HEK293 (cell line): ENCODE measurements at regions of chr5 and their contacts with region 1.

Region 1: GRCh38 chr5:138352071-138352721 is at the start of gene KDM3B:
- H3K4me3 ChIP-seq: peak within 1 kb of the TSS; percentile 83
- H3K27ac ChIP-seq: peak within 1 kb of the TSS; percentile 92
- H3K4me1 ChIP-seq: peaks cover 18% of the 10 kb centered on the region
- CTCF ChIP-seq: peak; percentile 98

Region 2: DNA sequence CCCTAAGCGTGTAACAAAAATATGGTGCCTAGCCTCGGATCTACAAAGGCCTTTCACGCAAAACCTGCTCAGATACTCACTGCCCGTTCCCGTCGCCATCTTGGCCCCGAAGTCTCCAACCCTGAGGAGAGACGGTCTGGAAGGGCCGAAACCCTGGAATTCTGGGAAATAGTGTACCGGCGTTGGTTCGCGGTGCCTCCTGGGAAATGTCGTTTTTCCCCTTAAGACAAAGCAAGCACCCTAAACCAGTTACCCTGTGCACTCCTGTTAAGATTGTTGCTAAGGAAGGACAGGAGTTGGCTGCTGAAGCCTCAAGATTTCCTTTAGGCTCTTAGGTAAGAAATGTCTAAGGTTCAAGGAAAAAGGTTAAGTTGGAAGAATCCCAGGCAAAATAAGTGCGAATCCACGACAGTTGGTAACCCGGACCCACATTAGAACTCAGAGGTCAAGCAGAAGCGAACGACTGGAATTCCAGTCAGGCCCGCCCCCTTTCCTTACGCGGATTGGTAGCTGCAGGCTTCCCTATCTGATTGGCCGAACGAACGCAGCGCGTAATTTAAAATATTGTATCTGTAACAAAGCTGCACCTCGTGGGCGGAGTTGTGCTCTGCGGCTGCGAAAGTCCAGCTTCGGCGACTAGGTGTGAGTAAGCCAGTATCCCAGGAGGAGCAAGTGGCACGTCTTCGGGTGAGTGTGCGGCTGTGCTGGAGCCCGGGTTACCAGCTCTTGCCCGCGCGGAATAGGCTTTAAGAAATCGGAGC is 173.5 kb before region 1 on chr5 and contains the starts of genes BRD8 and KIF20A:
- CTCF ChIA-PET with region 1: interaction called, 5 read pairs
- POLR2A ChIA-PET with region 1: interaction called, 11 read pairs
- H3K4me3 ChIP-seq: peak within 1 kb of the TSS; percentile 70
- H3K27ac ChIP-seq: peak within 1 kb of the TSS; percentile 90
- H3K4me1 ChIP-seq: 0 out of 2 replicates have a peak, but pooled peaks cover 3% of the 10 kb centered on the region
- CTCF ChIP-seq: no peak

Region 3: DNA sequence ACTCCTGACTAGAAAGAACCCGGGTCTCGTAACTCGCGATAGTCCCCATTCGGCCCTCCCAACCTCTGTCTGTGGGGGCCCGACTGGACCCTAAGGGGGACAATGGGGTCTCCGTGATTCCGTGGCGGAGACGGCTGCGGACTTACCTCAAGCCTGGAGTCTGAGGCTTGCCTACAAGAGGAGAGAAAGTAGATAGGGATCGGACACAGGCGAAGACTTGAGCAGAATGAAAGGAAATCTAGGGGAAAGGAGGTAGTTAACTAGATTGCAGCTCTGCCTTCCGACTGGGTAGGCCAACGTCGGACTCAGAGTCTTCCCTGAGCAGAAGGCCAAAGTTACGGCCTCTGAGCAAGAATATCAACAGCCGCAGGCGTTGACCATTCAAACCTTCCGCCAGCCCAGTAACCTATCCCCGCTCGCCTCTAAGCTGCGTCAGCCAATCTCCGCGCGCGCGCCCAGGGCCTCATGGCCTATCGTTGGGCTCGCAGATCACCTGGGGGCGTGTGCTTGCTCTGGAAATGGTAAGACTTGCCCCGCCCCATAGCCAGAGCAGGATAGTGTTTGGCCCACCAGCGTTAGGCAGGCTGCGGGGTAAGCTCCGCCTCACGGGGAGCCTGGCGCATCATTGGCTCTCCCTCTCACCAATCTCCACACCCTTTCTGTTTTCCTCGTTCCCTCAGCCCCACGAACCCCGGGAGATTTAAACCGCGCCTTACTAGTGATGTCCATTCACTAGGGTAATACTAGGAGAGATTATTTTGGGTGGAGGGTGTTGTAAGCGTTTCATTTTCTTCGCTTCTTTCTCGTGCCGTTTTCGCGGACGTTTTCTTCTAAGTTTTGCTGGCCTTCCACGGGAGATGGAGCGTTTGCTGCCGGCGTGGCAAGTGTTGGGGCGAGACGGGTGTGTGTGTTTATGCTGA is 20.5 kb before region 1 on chr5 and contains the start of gene CDC25C:
- CTCF ChIA-PET with region 1: interaction called, 273 read pairs
- POLR2A ChIA-PET with region 1: interaction called, 114 read pairs
- H3K4me3 ChIP-seq: peak within 1 kb of the TSS; percentile 78
- H3K27ac ChIP-seq: peak within 1 kb of the TSS; percentile 75
- H3K4me1 ChIP-seq: peaks cover 4% of the 10 kb centered on the region; the same call in 1 of the 2 replicates
- CTCF ChIP-seq: no peak

Region 4: DNA sequence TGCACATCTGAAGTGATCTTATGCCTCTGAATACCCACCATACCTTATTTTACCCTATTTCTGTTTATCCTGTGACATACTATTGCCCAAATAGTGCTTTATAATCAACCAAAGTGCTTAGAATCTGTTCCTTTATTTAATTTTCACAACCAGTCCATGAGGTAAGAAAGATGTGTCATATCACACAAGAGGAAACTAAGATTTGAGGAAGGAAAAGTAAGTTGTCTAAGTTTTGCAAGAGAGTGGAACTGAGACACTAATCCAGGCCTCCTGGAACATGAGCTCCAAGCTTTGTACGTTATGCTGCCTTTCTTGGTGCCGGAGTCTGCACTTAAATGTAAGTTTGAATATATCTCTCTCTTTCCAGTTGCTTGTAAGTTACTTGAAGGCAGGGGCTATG is 17.5 kb after region 1 on chr5:
- CTCF ChIA-PET with region 1: interaction called, 94 read pairs
- POLR2A ChIA-PET with region 1: interaction called, 4 read pairs
- H3K4me3 ChIP-seq: no peak overlapping the region
- H3K27ac ChIP-seq: no peak overlapping the region
- H3K4me1 ChIP-seq: peaks cover 20% of the 10 kb centered on the region
- CTCF ChIP-seq: no peak

Region 5: DNA sequence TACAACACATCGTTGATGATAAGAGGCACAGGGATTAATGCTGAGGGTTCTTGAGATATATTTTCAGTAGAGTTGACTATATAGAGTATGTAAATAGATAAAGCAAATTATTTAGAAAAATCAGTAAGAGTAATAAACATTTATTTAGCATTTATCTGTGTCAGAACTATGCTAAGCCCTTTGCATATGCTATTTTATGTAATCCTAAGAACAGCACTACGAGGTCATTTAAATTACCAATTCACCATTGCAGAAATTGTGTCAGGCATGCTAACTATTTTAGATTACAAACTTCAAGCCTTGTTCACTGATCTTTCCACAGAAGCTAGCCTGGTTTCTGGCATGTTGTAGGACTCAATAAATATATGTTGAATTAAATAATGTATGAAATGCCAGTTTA is 66.2 kb after region 1 on chr5:
- CTCF ChIA-PET with region 1: interaction called, 16 read pairs
- POLR2A ChIA-PET with region 1: no interaction called
- H3K4me3 ChIP-seq: no peak overlapping the region
- H3K27ac ChIP-seq: no peak overlapping the region
- H3K4me1 ChIP-seq: no peaks in the 10 kb centered on the region
- CTCF ChIP-seq: no peak

Region 6: DNA sequence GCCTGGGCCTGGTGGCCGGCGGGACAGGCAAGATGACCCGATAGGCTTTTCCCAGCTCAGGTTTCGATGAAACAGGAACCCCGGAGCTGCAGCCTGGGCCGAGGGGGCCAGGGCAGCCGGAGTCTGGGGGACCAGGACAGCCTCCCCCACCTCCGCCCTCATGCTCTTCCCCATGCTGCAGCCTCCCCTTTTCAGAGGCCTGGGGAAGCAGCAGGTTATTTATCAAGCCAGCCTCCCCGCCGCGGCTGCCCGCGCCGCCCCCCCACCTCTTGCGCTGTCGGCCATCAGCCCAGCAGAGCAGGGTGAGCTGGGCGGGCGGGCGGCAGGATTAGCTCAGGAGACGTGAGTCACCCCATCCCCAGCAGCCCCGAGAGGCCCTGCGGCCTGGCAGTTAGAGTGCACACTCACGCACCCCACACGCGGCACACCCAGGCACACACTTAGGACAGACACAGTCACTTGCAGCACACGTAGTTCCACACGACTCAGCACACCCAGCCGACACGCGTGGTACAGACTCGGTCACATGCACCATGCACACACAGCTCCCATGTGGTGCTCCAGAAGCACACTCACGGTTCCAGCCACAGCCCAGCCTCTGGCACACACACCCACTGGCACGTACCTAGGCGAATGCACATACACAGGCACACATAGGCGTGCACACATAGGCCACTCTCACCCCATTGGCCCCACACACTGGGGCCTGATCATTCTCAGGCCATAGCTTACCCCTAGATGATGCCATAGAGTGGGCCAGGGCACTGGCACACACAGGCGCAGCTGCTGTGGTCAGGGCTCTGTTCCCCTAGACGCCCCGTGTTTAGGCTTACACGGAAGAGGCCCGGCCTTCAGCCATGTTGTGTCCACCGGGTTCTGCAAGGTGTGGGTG is 1309.0 kb after region 1 on chr5:
- CTCF ChIA-PET with region 1: no interaction called
- POLR2A ChIA-PET with region 1: interaction called, 10 read pairs
- H3K4me3 ChIP-seq: no peak overlapping the region; the same call in 1 of the 2 replicates
- H3K27ac ChIP-seq: peak overlapping the region; percentile 36; the same call in 1 of the 2 replicates
- H3K4me1 ChIP-seq: no peaks in the 10 kb centered on the region
- CTCF ChIP-seq: no peak